ENCODE measurements at regions of chr6 and their contacts with region 1.

Region 1: GRCh38 chr6:105317607-105318533 is 85.0 kb downstream of the PREP start:
- DNase-seq: peak; percentile 33
- ATAC-seq: peak; percentile 71; the same call in 1 of the 2 replicates
- H3K4me3 Mint-ChIP-seq: no peak overlapping the region
- H3K27ac Mint-ChIP-seq: no peak overlapping the region
- H3K4me1 Mint-ChIP-seq: no peaks in the 10 kb centered on the region
- H3K27me3 Mint-ChIP-seq: no peaks in the 10 kb centered on the region
- CTCF ChIP-seq: no peak

Region 2: GRCh38 chr6:105301072-105301503 is 16.8 kb before region 1 on chr6:
- CTCF ChIA-PET with region 1: interaction called, 13 read pairs
- POLR2A ChIA-PET with region 1: no interaction called
- DNase-seq: no peak
- ATAC-seq: no peak
- H3K4me3 Mint-ChIP-seq: no peak overlapping the region
- H3K27ac Mint-ChIP-seq: no peak overlapping the region
- H3K4me1 Mint-ChIP-seq: peaks cover 17% of the 10 kb centered on the region
- H3K27me3 Mint-ChIP-seq: no peaks in the 10 kb centered on the region
- CTCF ChIP-seq: no peak

Region 3: DNA sequence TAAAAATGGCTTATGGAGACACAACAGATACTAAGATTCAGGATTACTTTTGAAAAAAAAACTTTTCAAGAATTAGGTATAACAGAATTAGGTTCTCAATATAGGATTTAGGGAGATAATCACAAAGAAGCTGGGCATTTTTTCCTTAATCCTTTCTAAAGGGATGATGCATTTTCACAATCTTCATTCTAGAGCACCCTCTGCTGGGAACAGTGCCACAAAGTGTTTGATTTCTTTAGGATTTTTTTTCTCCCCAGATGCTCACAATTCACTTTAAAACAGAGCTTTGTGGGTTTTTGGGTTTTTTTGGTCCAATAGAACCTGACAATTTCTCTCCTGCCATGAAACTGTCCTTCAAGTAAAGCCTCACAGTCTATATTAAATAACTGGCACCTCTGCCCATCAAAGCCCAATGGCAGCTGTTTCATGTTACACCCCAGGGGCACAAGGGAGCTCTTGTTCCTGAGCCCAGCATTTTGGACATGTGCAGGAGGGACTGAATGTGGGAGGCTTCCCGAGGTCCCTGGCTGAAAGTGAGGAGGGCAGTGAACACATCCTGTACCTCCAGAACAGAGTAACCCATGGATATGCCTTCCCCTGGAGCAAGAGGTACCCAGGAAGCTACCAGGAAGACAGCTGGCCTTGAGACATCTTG is 45.4 kb after region 1 on chr6:
- CTCF ChIA-PET with region 1: interaction called, 15 read pairs
- POLR2A ChIA-PET with region 1: no interaction called
- DNase-seq: no peak
- ATAC-seq: no peak
- H3K4me3 Mint-ChIP-seq: no peak overlapping the region
- H3K27ac Mint-ChIP-seq: no peak overlapping the region
- H3K4me1 Mint-ChIP-seq: peaks cover 2% of the 10 kb centered on the region; the same call in 1 of the 2 replicates
- H3K27me3 Mint-ChIP-seq: no peaks in the 10 kb centered on the region
- CTCF ChIP-seq: no peak

Region 4: GRCh38 chr6:105757512-105758200 is 439.8 kb after region 1 on chr6:
- CTCF ChIA-PET with region 1: no interaction called
- POLR2A ChIA-PET with region 1: no interaction called
- DNase-seq: no peak
- ATAC-seq: no peak
- H3K4me3 Mint-ChIP-seq: no peak overlapping the region
- H3K27ac Mint-ChIP-seq: no peak overlapping the region
- H3K4me1 Mint-ChIP-seq: peaks cover 23% of the 10 kb centered on the region
- H3K27me3 Mint-ChIP-seq: no peaks in the 10 kb centered on the region
- CTCF ChIP-seq: no peak

Measured in WTC11 (cell line).